GM12878 (cell line): ENCODE measurements at regions of chr12 and their contacts with region 1.

Region 1: GRCh38 chr12:76083904-76084862 is at the start of gene NAP1L1:
- DNase-seq: peak; percentile 79
- ATAC-seq: peak; percentile 89
- H3K4me3 ChIP-seq: peak within 1 kb of the TSS; percentile 74
- H3K27ac ChIP-seq: peak within 1 kb of the TSS; percentile 91
- H3K4me1 ChIP-seq: peaks cover 11% of the 10 kb centered on the region
- H3K27me3 ChIP-seq: no peaks in the 10 kb centered on the region; a peak in 1 of 4 replicates
- CTCF ChIP-seq: no peak
- EP300 ChIP-seq: no peak
- POLR2A ChIP-seq: peak; percentile 94
- RAD21 ChIP-seq: no peak
- polyA plus RNA-seq, gene NAP1L1: 380 to 655 TPM

Region 2: DNA sequence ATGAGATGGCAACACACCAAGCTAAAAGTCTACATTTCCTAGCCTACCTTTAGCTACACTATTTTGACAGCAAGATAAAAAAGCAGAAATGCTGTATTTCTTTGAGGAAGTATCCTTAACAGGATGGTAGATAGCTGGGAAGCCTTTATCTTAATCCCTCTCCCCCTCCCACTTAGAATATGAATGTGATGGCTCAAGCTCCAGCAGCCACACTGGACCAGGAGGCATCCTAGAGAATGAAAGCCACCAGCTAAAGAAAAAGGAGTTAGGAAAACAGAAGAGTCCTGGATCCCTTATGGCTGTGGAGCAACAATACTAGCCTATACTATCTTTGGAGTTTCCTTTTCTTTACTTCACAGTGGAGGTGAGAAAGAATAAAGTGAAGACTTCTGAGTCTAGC is 14.8 kb before region 1 on chr12:
- CTCF ChIA-PET with region 1: interaction called, 5 read pairs
- POLR2A ChIA-PET with region 1: interaction called, 7 read pairs
- RAD21 ChIA-PET with region 1: interaction called, 5 read pairs
- SMC1A ChIA-PET with region 1: interaction called, 29 read pairs
- in situ Hi-C with region 1: no loop called
- intact Hi-C with region 1: no loop called
- DNase-seq: no peak
- ATAC-seq: no peak; the same call in 1 of the 3 replicates
- H3K4me3 ChIP-seq: no peak overlapping the region
- H3K27ac ChIP-seq: no peak overlapping the region
- H3K4me1 ChIP-seq: no peaks in the 10 kb centered on the region; the same call in 1 of the 2 replicates
- H3K27me3 ChIP-seq: no peaks in the 10 kb centered on the region
- CTCF ChIP-seq: no peak
- EP300 ChIP-seq: no peak
- POLR2A ChIP-seq: no peak
- RAD21 ChIP-seq: no peak

Region 3: DNA sequence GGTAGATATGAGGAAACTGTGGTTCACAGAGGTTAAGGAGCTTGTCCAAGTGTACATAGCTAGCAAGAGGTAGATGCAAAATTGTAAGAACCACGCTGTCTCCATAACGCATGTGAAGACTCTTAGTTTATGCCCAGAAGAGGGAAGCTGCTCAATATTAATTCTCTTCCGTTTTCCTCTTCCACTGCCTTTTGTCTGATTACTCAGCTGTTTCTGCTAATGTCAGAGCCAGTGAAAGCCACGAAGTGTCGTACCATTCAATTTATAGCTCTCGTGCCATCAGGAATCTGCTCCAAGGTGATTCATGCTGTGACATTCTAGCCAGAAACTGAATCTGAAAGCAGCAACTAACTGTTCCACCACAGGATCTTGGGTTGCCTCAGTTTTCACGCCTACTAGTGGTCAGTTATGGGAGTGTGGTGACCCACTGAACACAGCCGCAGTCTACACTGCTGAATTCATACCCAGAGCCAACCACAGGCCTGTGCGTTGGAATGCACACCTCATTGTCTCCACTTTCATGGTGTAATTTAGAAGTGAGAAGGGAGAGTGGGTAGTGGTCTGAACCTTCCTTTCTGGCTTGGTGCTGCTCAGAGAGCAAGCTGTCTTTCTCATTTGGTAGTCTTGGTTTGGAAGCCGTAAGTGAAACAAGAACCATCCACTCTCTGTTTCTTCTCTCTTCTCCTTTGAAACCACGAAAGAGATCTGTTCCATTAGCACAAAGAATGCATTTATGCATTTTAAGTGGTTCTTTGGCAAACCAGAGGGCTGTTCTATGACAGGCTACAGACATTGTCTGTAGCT is 74.5 kb after region 1 on chr12:
- CTCF ChIA-PET with region 1: interaction called, 4 read pairs
- POLR2A ChIA-PET with region 1: no interaction called
- RAD21 ChIA-PET with region 1: interaction called, 6 read pairs
- SMC1A ChIA-PET with region 1: interaction called, 3 read pairs
- in situ Hi-C with region 1: loop called (anchors 5 kb)
- intact Hi-C with region 1: loop called (anchors 1 kb)
- DNase-seq: peak; percentile 91
- ATAC-seq: peak; percentile 98
- H3K4me3 ChIP-seq: 0 out of 2 replicates have a peak overlapping the region, but pooled peaks have one; percentile 16
- H3K27ac ChIP-seq: peak overlapping the region; percentile 29; the same call in 1 of the 2 replicates
- H3K4me1 ChIP-seq: peaks cover 14% of the 10 kb centered on the region
- H3K27me3 ChIP-seq: no peaks in the 10 kb centered on the region
- CTCF ChIP-seq: peak; percentile 77 to 79 (median 78)
- EP300 ChIP-seq: peak; percentile 77 to 89
- POLR2A ChIP-seq: no peak
- RAD21 ChIP-seq: peak; percentile 68

Region 4: GRCh38 chr12:76348079-76348901 is 264.1 kb after region 1 on chr12 and contains the start of gene BBS10:
- CTCF ChIA-PET with region 1: interaction called, 9 read pairs
- POLR2A ChIA-PET with region 1: interaction called, 5 read pairs
- RAD21 ChIA-PET with region 1: interaction called, 7 read pairs
- SMC1A ChIA-PET with region 1: interaction called, 13 read pairs
- in situ Hi-C with region 1: loop called (anchors 5 kb)
- intact Hi-C with region 1: loop called (anchors 2 kb)
- DNase-seq: peak; percentile 70
- ATAC-seq: peak; percentile 99
- H3K4me3 ChIP-seq: peak within 1 kb of the TSS; percentile 84
- H3K27ac ChIP-seq: peak within 1 kb of the TSS; percentile 83
- H3K4me1 ChIP-seq: peaks cover 7% of the 10 kb centered on the region; the same call in 1 of the 2 replicates
- H3K27me3 ChIP-seq: no peaks in the 10 kb centered on the region
- CTCF ChIP-seq: peak in 2 of 3 experiments; percentile 22 to 39; a peak in 3 of 6 replicates
- EP300 ChIP-seq: no peak
- POLR2A ChIP-seq: peak; percentile 93
- RAD21 ChIP-seq: 0 out of 2 replicates have a peak, but pooled peaks have one; percentile 7
- polyA plus RNA-seq, gene BBS10: 1.2 to 1.5 TPM

Region 5: DNA sequence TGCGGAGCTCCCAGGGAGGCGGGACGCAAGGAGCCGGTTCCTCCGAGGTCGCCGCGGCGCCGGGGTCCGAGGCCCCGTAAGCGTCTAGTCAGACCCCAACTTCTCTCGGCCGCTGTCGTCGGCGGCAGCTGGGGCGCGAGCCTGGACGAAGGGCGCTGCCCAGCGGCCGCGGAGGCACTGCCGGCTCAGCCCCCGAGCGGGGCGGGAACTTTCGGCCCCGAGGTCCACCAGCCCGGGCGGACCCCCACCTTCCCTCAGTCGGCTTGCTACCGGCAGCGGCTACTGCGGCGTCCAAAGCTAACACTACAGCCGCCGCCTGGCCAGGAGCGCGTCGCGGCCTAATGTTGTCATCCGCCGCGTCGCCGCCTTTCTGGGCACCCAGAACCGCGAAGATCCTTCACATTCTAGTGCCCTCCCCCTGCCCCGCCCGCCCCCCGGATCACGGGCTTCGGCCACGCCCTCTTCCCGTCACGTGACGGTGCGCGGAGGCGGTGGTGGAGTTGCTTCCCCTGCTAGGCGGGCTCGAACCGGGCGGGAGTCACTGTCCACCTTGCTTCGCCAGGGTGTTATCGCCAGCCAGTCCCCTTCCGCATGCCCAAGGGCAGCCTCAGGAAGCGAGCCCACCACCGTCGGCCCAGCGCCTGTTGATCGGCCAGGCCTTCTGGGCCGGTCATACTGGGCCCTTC is 475.4 kb after region 1 on chr12 and contains the start of gene OSBPL8:
- CTCF ChIA-PET with region 1: interaction called, 3 read pairs
- POLR2A ChIA-PET with region 1: interaction called, 3 read pairs
- RAD21 ChIA-PET with region 1: no interaction called
- SMC1A ChIA-PET with region 1: interaction called, 5 read pairs
- in situ Hi-C with region 1: no loop called
- intact Hi-C with region 1: loop called (anchors 5 kb)
- DNase-seq: peak; percentile 71
- ATAC-seq: peak; percentile 85
- H3K4me3 ChIP-seq: peak within 1 kb of the TSS; percentile 98
- H3K27ac ChIP-seq: peak within 1 kb of the TSS; percentile 96
- H3K4me1 ChIP-seq: peaks cover 3% of the 10 kb centered on the region; the same call in 1 of the 2 replicates
- H3K27me3 ChIP-seq: no peaks in the 10 kb centered on the region
- CTCF ChIP-seq: peak; percentile 13 to 42 (median 13); a peak in 3 of 6 replicates
- EP300 ChIP-seq: 0 out of 4 replicates have a peak, but pooled peaks of 1 of the 2 experiments have one; percentile 25
- POLR2A ChIP-seq: peak; percentile 99
- RAD21 ChIP-seq: 0 out of 2 replicates have a peak, but pooled peaks have one; percentile 22
- polyA plus RNA-seq, gene OSBPL8: 10.4 to 13.7 TPM

Region 6: DNA sequence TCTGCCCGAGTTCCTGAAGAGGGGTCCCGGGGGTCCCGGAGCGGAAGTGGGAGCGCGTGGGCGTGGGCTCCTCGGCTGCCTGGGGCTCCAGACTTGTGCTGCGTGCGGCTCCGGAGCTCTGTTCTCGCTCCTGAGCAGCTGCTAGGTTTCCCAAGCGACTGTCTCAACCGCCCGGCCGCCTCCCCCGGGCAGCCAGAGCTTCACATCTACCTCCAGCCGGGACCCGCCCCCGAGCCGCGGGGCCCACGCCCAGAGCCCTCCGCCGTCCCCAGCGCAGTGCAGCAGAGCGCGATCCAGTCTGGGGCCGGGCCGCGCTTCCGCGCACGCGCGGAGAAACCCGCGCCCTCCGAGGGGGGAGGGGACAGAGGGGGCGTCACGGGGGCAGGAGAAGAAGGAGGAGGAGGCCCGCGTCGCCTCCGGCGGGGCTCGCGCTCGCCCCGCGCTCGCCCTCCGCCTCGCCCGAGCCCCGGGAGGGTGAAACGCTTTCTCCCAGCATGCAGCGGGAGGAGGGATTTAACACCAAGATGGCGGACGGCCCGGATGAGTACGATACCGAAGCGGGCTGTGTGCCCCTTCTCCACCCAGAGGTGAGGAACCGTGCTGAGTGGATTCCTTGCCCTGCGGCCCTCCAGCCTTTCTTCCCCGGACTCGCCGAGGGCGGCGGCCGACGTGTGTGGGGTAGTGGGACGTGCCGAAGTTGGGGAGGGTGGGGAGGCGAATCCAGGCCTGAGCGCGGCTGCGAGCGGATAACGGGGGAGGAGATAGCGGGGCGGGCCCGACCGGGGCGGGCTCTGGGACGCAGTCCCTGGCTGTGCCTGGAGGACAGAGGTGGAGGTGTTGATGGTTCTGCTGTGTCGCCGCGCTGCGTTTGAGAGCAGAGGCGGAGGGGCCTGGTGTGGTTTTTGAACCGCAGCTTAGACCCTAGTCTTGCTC is 679.8 kb after region 1 on chr12 and contains the start of gene ZDHHC17:
- CTCF ChIA-PET with region 1: no interaction called
- POLR2A ChIA-PET with region 1: no interaction called
- RAD21 ChIA-PET with region 1: no interaction called
- SMC1A ChIA-PET with region 1: no interaction called
- in situ Hi-C with region 1: no loop called
- intact Hi-C with region 1: loop called (anchors 10 kb)
- DNase-seq: peak; percentile 66
- ATAC-seq: peak; percentile 93
- H3K4me3 ChIP-seq: peak within 1 kb of the TSS; percentile 85
- H3K27ac ChIP-seq: peak within 1 kb of the TSS; percentile 89
- H3K4me1 ChIP-seq: peaks cover 8% of the 10 kb centered on the region
- H3K27me3 ChIP-seq: no peaks in the 10 kb centered on the region
- CTCF ChIP-seq: no peak
- EP300 ChIP-seq: no peak
- POLR2A ChIP-seq: peak; percentile 98
- RAD21 ChIP-seq: no peak
- polyA plus RNA-seq, gene ZDHHC17: 4.3 to 4.9 TPM